ENCODE measurements at regions of chr6 and their contacts with region 1.

Region 1: DNA sequence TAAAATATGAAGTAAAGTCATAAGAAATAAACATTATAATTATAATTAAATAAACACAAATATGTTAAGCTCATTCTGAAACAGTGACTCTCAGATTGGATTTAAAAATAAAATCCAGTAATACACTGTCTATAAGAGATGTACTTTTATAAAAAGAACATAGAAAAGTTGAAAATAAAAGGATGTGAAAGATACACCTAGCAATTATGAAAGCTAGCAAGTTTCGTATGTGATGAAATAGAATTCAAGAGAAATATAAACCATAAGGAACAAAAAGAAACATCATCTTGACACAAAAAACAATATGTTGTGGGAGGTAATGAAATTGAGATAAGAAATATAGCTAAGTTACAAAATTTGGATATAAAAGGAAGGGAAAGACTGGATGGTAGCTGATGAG is 128.6 kb upstream of the CNR1 start:
- DNase-seq: no peak
- H3K4me3 ChIP-seq: no peak overlapping the region
- H3K27ac ChIP-seq: no peak overlapping the region
- H3K4me1 ChIP-seq: no peaks in the 10 kb centered on the region
- H3K27me3 ChIP-seq: no peaks in the 10 kb centered on the region
- CTCF ChIP-seq: no peak

Region 2: DNA sequence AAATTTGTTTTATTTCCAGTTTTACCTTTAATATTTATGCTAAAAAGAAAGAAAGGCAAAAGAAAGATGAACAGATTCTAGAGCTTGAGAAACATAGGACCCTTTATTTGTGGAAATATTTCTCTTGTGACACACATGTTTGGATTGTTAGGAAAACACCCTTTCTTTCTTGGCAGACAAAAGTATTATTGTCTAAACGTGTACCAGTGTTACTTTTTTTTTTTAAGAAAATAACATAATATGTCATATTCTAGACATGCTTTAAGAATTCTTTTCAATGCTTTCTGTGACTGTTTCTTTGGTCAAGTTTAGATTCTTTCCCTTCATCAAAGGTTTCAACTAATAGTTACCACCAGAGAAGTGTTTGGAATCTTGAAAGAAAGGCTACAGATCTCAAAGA is 54.8 kb after region 1 on chr6:
- CTCF ChIA-PET with region 1: no interaction called
- POLR2A ChIA-PET with region 1: no interaction called
- intact Hi-C with region 1: no loop called
- DNase-seq: no peak
- H3K4me3 ChIP-seq: no peak overlapping the region
- H3K27ac ChIP-seq: no peak overlapping the region
- H3K4me1 ChIP-seq: no peaks in the 10 kb centered on the region
- H3K27me3 ChIP-seq: peaks cover 3% of the 10 kb centered on the region; the same call in 1 of the 2 replicates
- CTCF ChIP-seq: no peak

Region 3: DNA sequence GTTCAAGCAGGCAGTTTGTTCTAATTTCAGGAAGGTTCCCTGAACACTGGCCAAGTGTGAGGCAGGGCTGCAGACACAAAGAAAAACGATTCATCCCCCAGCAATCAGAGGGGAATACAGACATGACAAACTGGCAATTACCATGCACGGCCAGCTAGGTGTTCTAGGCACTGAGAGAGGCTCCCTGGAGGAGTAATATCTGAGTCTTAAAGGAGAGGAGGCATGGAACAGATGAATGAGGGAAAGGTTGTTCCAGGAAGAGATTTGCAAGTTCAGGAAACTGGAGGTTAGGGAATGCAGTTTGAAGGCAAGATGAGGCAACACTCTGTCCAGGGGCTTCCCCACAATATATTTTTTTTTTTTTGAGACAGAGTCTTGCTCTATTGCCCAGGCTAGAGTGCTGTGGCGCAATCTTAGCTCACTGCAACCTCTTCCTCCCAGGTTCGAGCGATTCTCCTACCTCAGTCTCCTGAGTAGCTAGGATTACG is 1106.3 kb after region 1 on chr6:
- CTCF ChIA-PET with region 1: no interaction called
- POLR2A ChIA-PET with region 1: interaction called, 10 read pairs
- intact Hi-C with region 1: no loop called
- DNase-seq: no peak
- H3K4me3 ChIP-seq: no peak overlapping the region
- H3K27ac ChIP-seq: no peak overlapping the region
- H3K4me1 ChIP-seq: no peaks in the 10 kb centered on the region
- H3K27me3 ChIP-seq: no peaks in the 10 kb centered on the region
- CTCF ChIP-seq: no peak

Measured in PC-9 (cell line).